MCF 10A (cell line): ENCODE measurements at regions of chr15 and their contacts with region 1.

Region 1: DNA sequence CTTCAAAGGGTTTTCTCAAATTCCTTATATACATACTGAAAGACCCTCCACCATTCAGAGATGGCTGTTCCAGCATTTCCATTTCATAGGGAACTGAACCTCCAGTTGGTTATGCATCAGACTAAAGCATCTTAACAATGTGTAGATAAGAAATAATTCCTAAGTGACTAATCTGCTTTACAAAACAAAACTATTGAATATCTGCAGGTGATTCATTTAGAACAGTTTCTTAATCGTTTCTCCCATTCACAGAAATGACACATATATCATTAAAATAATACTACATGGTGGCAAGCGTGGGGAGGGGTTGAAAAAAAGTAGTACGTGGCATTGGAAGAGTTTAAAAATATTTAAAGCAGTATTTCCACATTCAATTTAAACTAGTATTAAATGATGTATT is 19.5 kb downstream of the COPS2 start:
- DNase-seq: peak; percentile 25
- H3K4me3 Mint-ChIP-seq: no peak overlapping the region
- H3K27ac Mint-ChIP-seq: no peak overlapping the region
- H3K4me1 Mint-ChIP-seq: peaks cover 6% of the 10 kb centered on the region
- H3K27me3 Mint-ChIP-seq: no peaks in the 10 kb centered on the region
- CTCF ChIP-seq: no peak

Region 2: DNA sequence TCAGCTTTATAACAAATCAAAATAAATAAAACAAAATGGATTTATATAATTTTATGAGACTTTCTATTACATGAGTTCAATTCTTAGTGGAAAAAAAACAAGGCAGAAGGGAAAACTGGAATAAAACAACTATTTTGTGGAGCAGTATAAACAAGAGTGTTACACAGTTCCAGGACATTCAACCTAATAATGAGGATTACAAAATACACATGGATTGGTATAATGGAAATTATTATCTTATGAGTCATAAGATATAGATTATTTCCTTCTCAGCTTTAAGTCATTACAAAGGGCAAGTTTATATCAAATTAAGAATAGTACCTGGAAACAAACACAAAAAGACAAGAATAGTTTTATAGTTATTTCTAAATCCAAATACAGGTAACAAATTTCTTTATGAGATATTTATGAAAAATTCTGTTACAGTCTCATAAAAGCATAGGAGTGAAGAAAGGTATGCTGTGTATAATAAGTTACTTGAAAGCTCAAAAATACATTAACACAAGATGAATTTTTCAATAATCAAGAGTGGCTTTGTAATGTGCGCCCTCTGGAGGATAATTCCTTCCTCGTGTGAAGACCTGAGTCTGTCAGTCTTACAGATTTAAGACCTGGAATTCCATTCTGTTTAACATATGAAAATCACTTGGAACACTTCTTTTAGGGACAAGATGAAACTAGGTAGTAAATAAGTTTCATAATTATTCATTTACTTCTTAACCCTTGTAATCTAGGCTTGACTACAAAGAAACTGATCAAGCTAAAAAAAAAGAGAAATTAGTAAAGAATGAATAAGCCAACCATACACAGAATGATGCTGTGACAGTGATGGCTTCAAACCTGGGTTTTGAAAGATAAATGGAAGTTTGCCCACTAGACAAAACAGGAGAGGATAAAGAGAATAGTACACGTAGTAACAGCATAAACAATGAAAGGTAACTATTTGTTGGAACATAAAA is 10.0 kb after region 1 on chr15:
- CTCF ChIA-PET with region 1: interaction called, 20 read pairs
- POLR2A ChIA-PET with region 1: interaction called, 4 read pairs
- intact Hi-C with region 1: no loop called
- DNase-seq: peak; percentile 58
- H3K4me3 Mint-ChIP-seq: no peak overlapping the region
- H3K27ac Mint-ChIP-seq: no peak overlapping the region
- H3K4me1 Mint-ChIP-seq: peaks cover 33% of the 10 kb centered on the region
- H3K27me3 Mint-ChIP-seq: no peaks in the 10 kb centered on the region
- CTCF ChIP-seq: peak; percentile 64

Region 3: DNA sequence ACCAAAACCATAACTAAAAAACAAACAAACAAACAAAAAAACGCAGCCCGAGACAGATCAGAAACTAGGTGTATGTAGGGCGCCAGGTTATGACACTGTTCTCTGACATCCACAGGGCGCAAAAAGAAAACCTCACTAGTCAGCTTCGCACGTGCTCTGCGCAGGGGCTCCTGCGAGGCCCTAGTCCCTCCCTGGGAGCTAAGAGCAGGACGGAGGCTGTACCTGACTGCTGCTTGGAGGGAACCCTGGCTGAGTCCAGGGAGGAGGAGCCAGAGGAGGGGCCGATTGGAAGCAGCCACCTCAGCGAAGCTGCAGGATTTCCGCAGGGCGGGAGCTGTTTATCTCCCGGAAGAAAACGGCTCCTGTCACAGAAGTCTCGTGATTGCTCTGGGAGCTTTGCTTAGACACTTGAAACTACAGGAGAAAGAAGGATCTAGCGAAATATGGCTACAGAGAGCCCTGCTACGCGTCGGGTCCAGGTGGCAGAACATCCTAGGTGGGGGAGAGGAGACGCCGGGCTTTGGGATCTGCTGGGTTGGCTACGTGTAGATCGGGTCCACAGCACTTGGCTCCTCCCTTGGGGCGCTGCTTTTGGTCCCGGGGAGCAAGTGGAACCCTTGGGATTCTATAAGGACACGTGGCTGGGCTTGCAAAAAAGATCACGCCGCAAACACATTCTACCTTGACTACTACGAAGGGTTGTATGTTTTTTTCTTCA is 34.1 kb after region 1 on chr15 and contains the start of gene GALK2:
- CTCF ChIA-PET with region 1: no interaction called
- POLR2A ChIA-PET with region 1: interaction called, 3 read pairs
- intact Hi-C with region 1: loop called (anchors 1 kb)
- DNase-seq: peak; percentile 95
- H3K4me3 Mint-ChIP-seq: peak within 1 kb of the TSS; percentile 96
- H3K27ac Mint-ChIP-seq: peak within 1 kb of the TSS; percentile 99
- H3K4me1 Mint-ChIP-seq: no peaks in the 10 kb centered on the region
- H3K27me3 Mint-ChIP-seq: no peaks in the 10 kb centered on the region
- CTCF ChIP-seq: no peak
- total RNA-seq, gene GALK2: 41.6 and 43.5 TPM in 2 replicates

Region 4: DNA sequence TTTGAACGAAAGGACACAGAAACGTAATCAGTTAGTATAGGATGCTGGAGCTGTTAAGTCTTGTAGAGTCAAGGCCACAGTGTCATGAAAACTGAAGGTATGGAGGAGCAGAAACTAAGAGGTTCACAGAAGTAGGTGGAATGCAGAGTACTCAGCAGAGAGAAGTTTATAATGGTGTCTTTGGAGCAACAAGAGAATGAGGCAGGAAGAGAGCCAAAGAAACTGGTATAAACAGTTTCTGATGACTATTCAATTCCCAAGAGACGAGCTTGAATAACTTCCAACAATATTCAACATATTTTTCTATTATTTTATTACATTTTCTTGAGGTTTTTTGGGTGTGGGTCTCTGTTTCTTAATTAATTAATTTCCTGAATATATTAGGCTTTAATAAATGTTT is 63.8 kb after region 1 on chr15:
- CTCF ChIA-PET with region 1: no interaction called
- POLR2A ChIA-PET with region 1: no interaction called
- intact Hi-C with region 1: no loop called
- DNase-seq: no peak
- H3K4me3 Mint-ChIP-seq: no peak overlapping the region
- H3K27ac Mint-ChIP-seq: no peak overlapping the region
- H3K4me1 Mint-ChIP-seq: peaks cover 16% of the 10 kb centered on the region
- H3K27me3 Mint-ChIP-seq: no peaks in the 10 kb centered on the region
- CTCF ChIP-seq: no peak

Region 5: DNA sequence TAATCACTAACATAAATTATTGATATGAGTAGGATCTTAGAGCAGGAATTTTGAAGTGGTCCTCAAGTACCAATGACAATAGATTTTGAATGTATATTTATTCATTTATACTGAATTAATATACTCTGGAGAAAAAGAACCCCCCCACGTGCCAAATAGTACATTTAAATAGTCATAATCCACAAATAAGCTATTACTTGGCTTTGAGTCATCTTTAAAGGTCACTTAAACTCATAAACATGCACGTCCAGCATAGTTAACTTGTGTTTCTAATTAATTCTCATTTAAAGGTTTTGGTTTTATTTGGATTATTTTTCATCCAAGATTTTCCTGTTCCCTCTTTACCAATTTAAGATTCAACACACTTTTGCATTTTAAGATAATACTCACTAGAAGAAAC is 322.3 kb after region 1 on chr15:
- CTCF ChIA-PET with region 1: no interaction called
- POLR2A ChIA-PET with region 1: no interaction called
- intact Hi-C with region 1: no loop called
- DNase-seq: no peak
- H3K4me3 Mint-ChIP-seq: no peak overlapping the region
- H3K27ac Mint-ChIP-seq: no peak overlapping the region
- H3K4me1 Mint-ChIP-seq: peaks cover 23% of the 10 kb centered on the region
- H3K27me3 Mint-ChIP-seq: no peaks in the 10 kb centered on the region
- CTCF ChIP-seq: no peak